WTC11 (cell line): ENCODE measurements at regions of chr2 and their contacts with region 1.

Region 1: DNA sequence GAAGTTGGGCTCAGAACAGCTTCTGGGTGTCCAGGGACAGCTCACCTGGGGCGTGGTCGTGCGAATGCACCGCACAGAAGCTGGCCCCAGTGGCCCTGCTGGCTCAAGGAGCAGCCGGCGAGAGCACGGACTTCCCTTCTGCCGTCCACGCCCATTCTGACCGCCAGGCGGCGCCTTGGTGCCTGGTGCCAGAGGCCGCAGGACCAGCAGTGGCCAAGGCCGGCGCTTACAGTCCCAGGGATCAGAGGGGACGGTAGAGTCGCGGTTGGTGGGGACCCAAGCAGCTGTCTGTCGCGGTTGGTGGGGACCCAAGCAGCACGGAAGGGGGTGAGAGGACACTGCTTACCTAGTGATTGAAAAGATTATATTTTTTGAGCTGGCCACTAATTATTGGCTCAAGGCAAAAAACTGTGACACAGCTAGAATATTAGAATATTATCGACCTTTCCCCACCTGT is 25.7 kb downstream of the NPPC start:
- DNase-seq: peak; percentile 98
- ATAC-seq: peak; percentile 95
- H3K4me3 Mint-ChIP-seq: peak overlapping the region; percentile 34; the same call in 1 of the 2 replicates
- H3K27ac Mint-ChIP-seq: no peak overlapping the region
- H3K4me1 Mint-ChIP-seq: peaks cover 3% of the 10 kb centered on the region; the same call in 1 of the 2 replicates
- H3K27me3 Mint-ChIP-seq: no peaks in the 10 kb centered on the region
- CTCF ChIP-seq: peak; percentile 94

Region 2: GRCh38 chr2:231687133-231687852 is 213.2 kb before region 1 on chr2:
- CTCF ChIA-PET with region 1: no interaction called
- POLR2A ChIA-PET with region 1: no interaction called
- DNase-seq: peak; percentile 92
- ATAC-seq: peak; percentile 87
- H3K4me3 Mint-ChIP-seq: peak overlapping the region; percentile 64
- H3K27ac Mint-ChIP-seq: peak overlapping the region; percentile 61
- H3K4me1 Mint-ChIP-seq: peaks cover 49% of the 10 kb centered on the region
- H3K27me3 Mint-ChIP-seq: no peaks in the 10 kb centered on the region
- CTCF ChIP-seq: peak; percentile 33

Region 3: DNA sequence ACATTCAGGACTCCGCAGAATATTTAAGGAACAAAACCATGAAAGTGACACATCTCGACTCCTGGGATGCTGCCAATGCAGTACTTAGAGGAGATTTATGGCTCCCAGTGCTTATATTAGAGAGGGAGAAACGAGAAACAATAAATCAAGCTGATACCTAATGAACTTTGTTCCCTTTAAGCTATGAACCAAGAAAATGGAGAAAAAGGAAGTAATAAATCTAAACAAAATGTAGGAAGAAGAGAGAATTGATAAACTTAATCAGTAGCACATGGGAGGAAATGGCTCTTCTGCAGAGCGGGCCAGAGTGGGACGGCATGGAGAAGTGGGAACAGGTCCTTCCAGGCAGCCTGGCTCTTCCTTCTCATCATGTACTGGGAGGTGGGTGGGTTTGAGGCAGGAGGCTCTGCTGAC is 17.0 kb before region 1 on chr2:
- CTCF ChIA-PET with region 1: interaction called, 18 read pairs
- POLR2A ChIA-PET with region 1: no interaction called
- DNase-seq: no peak
- ATAC-seq: no peak
- H3K4me3 Mint-ChIP-seq: no peak overlapping the region
- H3K27ac Mint-ChIP-seq: no peak overlapping the region
- H3K4me1 Mint-ChIP-seq: peaks cover 8% of the 10 kb centered on the region
- H3K27me3 Mint-ChIP-seq: peaks cover 3% of the 10 kb centered on the region
- CTCF ChIP-seq: no peak

Region 4: DNA sequence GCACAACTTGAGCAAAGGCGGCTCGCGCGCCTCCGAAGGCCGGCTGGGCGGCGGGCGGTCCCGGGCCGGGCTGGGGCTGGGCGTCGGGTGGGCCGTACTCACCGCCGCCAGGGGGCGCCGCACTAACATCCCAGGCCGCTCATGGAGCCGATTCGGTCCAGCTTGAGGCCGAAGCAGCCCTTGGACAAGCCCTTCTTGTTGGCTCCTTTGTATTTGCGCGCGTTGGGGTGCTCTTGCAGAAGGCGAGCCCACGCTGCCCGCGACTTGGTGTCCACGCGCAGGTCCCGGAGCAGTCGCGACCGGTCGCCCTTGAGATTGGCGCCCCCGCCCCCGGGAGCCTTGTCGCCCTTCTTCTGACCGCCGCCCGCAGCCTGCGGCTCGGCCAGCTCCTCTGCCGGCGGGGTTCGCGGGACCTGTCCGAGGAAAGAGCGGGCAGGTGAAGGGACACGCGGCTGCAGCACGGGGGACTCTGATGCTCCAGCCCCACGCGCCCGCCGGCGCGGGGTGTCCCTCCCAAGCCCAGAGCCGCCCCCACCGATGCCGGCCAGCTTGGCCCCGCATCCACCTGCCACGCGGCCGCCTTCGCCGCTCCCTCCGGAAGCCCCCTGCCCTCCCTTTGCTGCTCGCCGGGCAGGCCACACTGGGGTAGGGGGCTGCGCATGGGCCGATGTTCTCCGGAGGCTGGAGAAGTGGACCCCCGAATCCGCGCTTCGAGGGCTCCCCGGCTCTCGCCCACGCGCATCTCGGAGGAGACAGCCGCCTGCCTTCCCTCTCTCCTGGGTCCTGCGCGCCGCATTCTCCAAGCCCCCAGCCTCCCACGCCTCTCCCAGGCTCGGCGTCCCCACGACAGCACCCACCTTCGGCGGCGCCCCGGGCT is 25.0 kb after region 1 on chr2:
- CTCF ChIA-PET with region 1: interaction called, 70 read pairs
- POLR2A ChIA-PET with region 1: no interaction called
- DNase-seq: peak; percentile 88
- ATAC-seq: peak; percentile 41
- H3K4me3 Mint-ChIP-seq: peak overlapping the region; percentile 74
- H3K27ac Mint-ChIP-seq: no peak overlapping the region
- H3K4me1 Mint-ChIP-seq: peaks cover 15% of the 10 kb centered on the region
- H3K27me3 Mint-ChIP-seq: peaks cover 58% of the 10 kb centered on the region
- CTCF ChIP-seq: peak; percentile 95

Region 5: GRCh38 chr2:232142049-232142448 is 241.5 kb after region 1 on chr2:
- CTCF ChIA-PET with region 1: interaction called, 25 read pairs
- POLR2A ChIA-PET with region 1: no interaction called
- DNase-seq: peak; percentile 44
- ATAC-seq: peak; percentile 93
- H3K4me3 Mint-ChIP-seq: no peak overlapping the region
- H3K27ac Mint-ChIP-seq: no peak overlapping the region
- H3K4me1 Mint-ChIP-seq: no peaks in the 10 kb centered on the region
- H3K27me3 Mint-ChIP-seq: no peaks in the 10 kb centered on the region
- CTCF ChIP-seq: peak; percentile 62

Region 6: GRCh38 chr2:232327105-232328041 is 426.9 kb after region 1 on chr2:
- CTCF ChIA-PET with region 1: interaction called, 38 read pairs
- POLR2A ChIA-PET with region 1: no interaction called
- DNase-seq: peak; percentile 96
- ATAC-seq: peak; percentile 71
- H3K4me3 Mint-ChIP-seq: no peak overlapping the region
- H3K27ac Mint-ChIP-seq: peak overlapping the region; percentile 68; the same call in 1 of the 2 replicates
- H3K4me1 Mint-ChIP-seq: peaks cover 3% of the 10 kb centered on the region; the same call in 1 of the 2 replicates
- H3K27me3 Mint-ChIP-seq: no peaks in the 10 kb centered on the region
- CTCF ChIP-seq: peak; percentile 91